Right ventricle myocardium inferior (tissue), 1 donor: ENCODE measurements at regions of chr2 and their contacts with region 1.

Region 1: DNA sequence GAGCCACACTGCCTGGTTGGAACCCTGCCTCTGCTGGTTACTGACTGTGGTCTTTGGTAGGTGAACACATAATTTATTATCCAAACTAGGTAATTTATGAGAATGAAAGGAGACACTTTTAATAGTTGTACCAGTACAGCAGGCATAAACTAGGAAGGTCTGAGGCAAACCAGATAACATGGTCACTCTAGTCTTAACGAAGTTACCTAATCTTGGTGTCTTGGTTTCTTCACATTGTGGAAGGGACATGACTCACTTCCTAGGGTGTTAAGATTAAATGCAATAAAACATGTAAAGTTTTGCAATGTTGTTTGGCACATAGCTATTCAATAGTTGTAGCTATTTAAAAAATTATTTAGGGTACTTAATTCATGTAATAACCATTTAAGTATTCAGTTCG is 23.3 kb downstream of the SPTBN1 start:
- DNase-seq: no peak
- ATAC-seq: peak; percentile 45

Region 2: GRCh38 chr2:54570925-54571694 is 91.7 kb after region 1 on chr2:
- intact Hi-C with region 1: no loop called
- DNase-seq: no peak
- ATAC-seq: peak; percentile 69

Region 3: DNA sequence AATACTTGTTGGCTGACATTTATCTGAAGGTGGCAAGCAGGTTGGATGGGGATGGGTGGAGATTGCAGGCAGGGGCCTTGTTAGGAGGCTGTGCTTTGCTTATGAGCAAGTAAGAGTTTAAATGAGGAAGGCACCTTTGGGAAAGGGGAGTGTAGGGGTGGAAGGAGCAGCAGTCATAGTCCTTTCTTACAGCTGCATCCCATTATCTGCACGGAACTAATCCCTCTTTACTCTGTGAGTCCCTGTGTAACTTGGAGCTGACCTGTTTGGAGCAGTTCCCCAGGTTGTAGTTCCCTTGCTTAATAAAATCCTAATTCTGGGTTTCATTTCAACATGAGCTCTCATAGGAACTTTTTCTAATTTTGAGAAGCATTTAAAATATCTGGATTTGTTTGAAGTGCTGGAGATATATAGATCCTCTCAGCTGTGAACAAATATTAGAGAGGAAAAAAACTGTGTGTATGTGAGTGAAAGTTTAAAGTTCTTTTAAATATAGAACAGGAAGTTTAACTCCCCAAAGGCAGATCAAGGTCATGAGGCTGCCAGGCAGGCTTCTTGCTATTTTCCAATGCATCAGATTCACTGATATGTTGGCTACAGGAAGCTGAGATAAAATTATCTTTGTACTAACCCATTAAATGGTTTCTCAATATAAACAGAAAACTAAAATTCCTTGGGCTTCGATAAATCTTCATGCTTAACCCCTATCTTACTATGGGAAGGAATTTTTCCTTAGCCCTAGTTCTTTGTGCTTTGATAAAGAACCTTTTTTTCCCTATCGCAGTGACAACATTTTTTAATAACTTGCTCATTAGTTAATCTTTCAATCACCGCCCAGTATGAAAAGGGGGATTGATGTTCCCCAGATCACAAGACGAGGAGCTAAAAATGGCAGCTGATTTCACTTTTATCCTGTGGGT is 139.5 kb after region 1 on chr2:
- intact Hi-C with region 1: loop called (anchors 5 kb)
- DNase-seq: no peak
- ATAC-seq: peak; percentile 29